ENCODE measurements at regions of chr5 and their contacts with region 1.

Region 1: DNA sequence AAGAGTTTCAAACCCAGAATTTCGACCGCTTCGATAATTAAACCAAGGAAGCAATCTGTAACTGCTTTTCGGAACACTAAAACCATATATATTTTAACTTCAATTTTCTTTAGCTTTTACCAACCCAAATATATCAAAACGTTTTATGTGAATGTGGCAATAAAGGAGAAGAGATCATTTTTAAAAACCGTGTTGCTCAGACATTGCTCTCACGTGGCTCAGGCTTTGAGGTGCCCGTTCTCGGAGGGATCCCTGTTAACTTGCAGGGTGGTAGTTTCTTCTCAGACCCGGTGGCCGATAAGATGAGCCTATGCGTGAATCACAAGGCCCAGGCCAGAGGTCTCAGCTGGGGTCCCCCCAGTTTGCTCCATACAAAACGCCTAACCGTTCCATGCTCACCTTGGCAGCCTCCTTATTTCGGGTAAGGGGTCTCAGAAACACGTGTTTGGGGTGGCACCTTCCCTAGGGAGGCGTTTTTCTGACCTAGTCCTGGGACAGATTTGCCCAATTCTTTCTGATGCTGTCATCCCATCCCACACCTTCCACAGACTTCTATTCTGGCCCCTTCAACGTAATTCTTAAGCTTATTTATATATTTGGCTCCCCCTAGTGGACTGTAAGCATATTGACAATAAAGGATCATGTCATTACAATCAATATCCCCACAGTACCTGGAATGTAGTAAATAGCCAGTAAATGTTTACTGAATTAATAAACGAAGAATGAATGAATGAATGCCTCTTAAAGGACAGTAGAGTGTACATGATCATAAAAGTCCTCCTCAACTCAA is 48.1 kb downstream of the THBS4 start:
- DNase-seq: peak; percentile 54
- ATAC-seq: peak; percentile 78
- H3K4me3 ChIP-seq: no peak overlapping the region
- H3K27ac ChIP-seq: no peak overlapping the region
- H3K4me1 ChIP-seq: peaks cover 23% of the 10 kb centered on the region
- H3K27me3 ChIP-seq: no peaks in the 10 kb centered on the region; a peak in 1 of 5 replicates
- CTCF ChIP-seq: peak; percentile 77
- EP300 ChIP-seq: no peak
- POLR2A ChIP-seq: no peak
- RAD21 ChIP-seq: peak; percentile 53; the same call in 1 of the 2 replicates

Region 2: DNA sequence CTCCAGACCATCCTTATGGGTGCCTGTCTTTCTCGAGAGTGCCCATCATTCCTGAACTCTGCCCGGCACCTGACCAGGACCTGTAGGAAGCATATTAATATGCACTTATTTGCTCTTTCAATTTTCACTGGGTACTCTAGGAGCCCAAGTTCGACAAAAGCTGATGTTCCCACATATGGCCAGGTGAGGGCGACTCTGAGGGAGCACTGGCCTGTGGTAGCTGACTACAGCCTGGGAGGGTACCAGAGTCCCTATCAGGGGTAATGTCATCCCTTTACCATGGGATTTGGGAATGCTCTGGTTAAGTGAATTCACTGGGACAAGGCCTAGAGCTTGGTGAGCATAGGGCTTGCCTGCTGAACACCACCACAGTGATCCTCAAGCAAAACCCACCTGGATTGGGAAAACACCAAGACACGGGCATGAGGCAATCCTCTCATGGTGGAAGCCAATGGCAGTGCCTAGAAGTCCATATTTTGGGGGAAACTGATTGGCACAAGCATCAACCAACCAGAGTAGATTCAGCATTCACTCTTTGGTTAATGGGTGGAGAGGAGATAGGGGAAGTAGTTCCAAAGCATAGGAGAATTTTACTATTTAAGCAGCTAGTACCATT is 204.5 kb before region 1 on chr5:
- CTCF ChIA-PET with region 1: interaction called, 11 read pairs
- POLR2A ChIA-PET with region 1: no interaction called
- in situ Hi-C with region 1: loop called (anchors 5 kb)
- intact Hi-C with region 1: no loop called
- DNase-seq: peak; percentile 13
- ATAC-seq: peak; percentile 75
- H3K4me3 ChIP-seq: no peak overlapping the region
- H3K27ac ChIP-seq: no peak overlapping the region
- H3K4me1 ChIP-seq: no peaks in the 10 kb centered on the region
- H3K27me3 ChIP-seq: peaks cover 0 to 5% of the 10 kb centered on the region in 2 experiments; a peak in 3 of 5 replicates
- CTCF ChIP-seq: peak; percentile 61
- EP300 ChIP-seq: no peak
- POLR2A ChIP-seq: no peak
- RAD21 ChIP-seq: no peak

Region 3: DNA sequence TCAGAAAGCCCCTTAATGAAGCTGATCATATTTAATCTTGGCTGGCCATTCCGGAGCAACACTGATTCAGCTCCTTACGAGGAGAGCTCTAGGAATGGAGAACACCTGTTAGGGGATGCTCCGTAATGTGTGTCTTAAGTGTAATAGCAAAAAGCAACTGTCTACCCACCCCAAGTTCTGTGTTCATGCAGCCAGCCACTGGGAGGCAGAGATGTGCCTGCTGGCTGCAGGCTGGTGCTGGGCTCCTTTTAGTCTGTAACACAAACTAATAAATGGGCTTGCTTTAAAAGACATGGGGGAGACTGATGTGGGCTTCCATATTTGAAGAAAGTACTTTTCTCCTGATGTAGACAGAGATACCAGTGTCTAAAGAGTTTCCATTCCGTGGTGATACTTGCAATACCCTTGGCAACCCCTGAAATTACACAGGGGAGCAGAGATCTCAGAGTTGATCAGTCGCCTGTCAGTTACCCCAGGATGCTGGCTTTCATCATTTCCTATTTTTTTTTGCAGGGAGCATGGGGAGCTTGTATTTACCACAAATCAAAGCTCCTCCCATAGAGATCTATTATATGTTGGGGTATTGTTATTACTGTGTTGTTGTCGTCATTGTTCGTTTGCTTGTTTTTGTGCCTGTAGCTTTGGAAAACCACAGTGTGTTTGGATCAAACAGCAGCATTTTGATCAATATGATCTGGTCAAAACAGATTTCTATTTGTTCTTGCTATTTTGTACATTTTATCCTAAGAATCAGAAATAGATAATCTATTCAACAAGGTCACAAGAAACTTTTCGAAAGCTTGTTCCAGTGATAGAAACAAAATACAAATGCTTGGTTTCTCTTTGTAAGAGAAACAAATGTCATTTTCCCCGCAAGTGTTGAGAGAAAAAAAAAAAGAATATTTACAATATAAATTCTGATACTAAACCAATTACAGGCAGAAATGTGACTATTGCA is 158.1 kb before region 1 on chr5:
- CTCF ChIA-PET with region 1: interaction called, 10 read pairs
- POLR2A ChIA-PET with region 1: no interaction called
- in situ Hi-C with region 1: no loop called
- intact Hi-C with region 1: loop called (anchors 1 kb)
- DNase-seq: no peak
- ATAC-seq: peak; percentile 70
- H3K4me3 ChIP-seq: no peak overlapping the region
- H3K27ac ChIP-seq: no peak overlapping the region
- H3K4me1 ChIP-seq: no peaks in the 10 kb centered on the region
- H3K27me3 ChIP-seq: no peaks in the 10 kb centered on the region; a peak in 1 of 5 replicates
- CTCF ChIP-seq: 0 out of 2 replicates have a peak, but pooled peaks have one; percentile 34
- EP300 ChIP-seq: no peak
- POLR2A ChIP-seq: no peak
- RAD21 ChIP-seq: no peak

Region 4: GRCh38 chr5:79962575-79963222 is 120.6 kb before region 1 on chr5:
- CTCF ChIA-PET with region 1: no interaction called
- POLR2A ChIA-PET with region 1: no interaction called
- in situ Hi-C with region 1: no loop called
- intact Hi-C with region 1: loop called (anchors 10 kb)
- DNase-seq: no peak
- ATAC-seq: peak; percentile 48
- H3K4me3 ChIP-seq: no peak overlapping the region
- H3K27ac ChIP-seq: no peak overlapping the region
- H3K4me1 ChIP-seq: no peaks in the 10 kb centered on the region
- H3K27me3 ChIP-seq: peaks cover 4 to 14% of the 10 kb centered on the region in 2 experiments; a peak in 2 of 5 replicates
- CTCF ChIP-seq: no peak
- EP300 ChIP-seq: no peak
- POLR2A ChIP-seq: no peak
- RAD21 ChIP-seq: no peak

Measured in HepG2 (cell line).